GM12878 (cell line): ENCODE measurements at regions of chr1 and their contacts with region 1.

Region 1: GRCh38 chr1:179365320-179366092 is at the start of gene AXDND1:
- DNase-seq: peak; percentile 70
- ATAC-seq: peak; percentile 96
- H3K4me3 ChIP-seq: peak within 1 kb of the TSS; percentile 79
- H3K27ac ChIP-seq: peak within 1 kb of the TSS; percentile 97
- H3K4me1 ChIP-seq: no peaks in the 10 kb centered on the region; the same call in 1 of the 2 replicates
- H3K27me3 ChIP-seq: 0 out of 4 replicates have a peak, but pooled peaks cover 0 to 2% of the 10 kb centered on the region in 2 experiments
- CTCF ChIP-seq: peak in 1 of 3 experiments; percentile 6; a peak in 1 of 6 replicates
- EP300 ChIP-seq: no peak
- POLR2A ChIP-seq: peak; percentile 67
- RAD21 ChIP-seq: no peak
- polyA plus RNA-seq, gene AXDND1: 0.16 to 0.27 TPM

Region 2: DNA sequence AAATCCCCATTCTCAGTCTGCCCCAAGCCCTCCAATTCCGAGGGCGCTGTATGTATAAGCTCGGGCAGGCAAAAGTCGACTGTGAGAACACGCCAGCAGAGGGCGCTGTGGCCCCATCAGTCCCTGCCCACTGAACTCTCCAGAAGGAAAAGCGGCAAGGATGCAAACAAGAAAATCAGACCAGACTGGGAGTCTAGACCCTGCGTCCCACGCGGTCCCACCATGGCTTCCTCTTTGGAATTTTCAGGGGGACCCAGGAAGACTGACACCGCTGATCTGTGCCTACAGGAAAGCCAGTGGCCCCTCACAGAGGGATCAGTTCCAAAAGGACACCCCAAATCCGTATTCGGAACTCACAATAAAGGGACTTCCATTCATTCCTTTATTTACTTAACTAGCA is 833.1 kb before region 1 on chr1:
- CTCF ChIA-PET with region 1: no interaction called
- POLR2A ChIA-PET with region 1: no interaction called
- RAD21 ChIA-PET with region 1: interaction called, 3 read pairs
- SMC1A ChIA-PET with region 1: no interaction called
- in situ Hi-C with region 1: loop called (anchors 5 kb)
- intact Hi-C with region 1: no loop called
- DNase-seq: no peak
- ATAC-seq: peak; percentile 97
- H3K4me3 ChIP-seq: no peak overlapping the region
- H3K27ac ChIP-seq: no peak overlapping the region
- H3K4me1 ChIP-seq: no peaks in the 10 kb centered on the region
- H3K27me3 ChIP-seq: no peaks in the 10 kb centered on the region; a peak in 1 of 4 replicates
- CTCF ChIP-seq: peak; percentile 87 to 93 (median 89); a peak in 5 of 6 replicates
- EP300 ChIP-seq: no peak
- POLR2A ChIP-seq: no peak
- RAD21 ChIP-seq: peak; percentile 88

Region 3: GRCh38 chr1:179025125-179025974 is 340.2 kb before region 1 on chr1 and contains the start of gene FAM20B:
- CTCF ChIA-PET with region 1: interaction called, 3 read pairs
- POLR2A ChIA-PET with region 1: no interaction called
- RAD21 ChIA-PET with region 1: no interaction called
- SMC1A ChIA-PET with region 1: no interaction called
- in situ Hi-C with region 1: no loop called
- intact Hi-C with region 1: loop called (anchors 5 kb)
- DNase-seq: peak; percentile 59
- ATAC-seq: peak; percentile 89
- H3K4me3 ChIP-seq: peak within 1 kb of the TSS; percentile 72
- H3K27ac ChIP-seq: peak within 1 kb of the TSS; percentile 81
- H3K4me1 ChIP-seq: peaks cover 19% of the 10 kb centered on the region
- H3K27me3 ChIP-seq: no peaks in the 10 kb centered on the region
- CTCF ChIP-seq: no peak
- EP300 ChIP-seq: no peak
- POLR2A ChIP-seq: no peak
- RAD21 ChIP-seq: no peak
- polyA plus RNA-seq, gene FAM20B: 2.4 to 4.0 TPM

Region 4: GRCh38 chr1:179105350-179105749 is 260.2 kb before region 1 on chr1:
- CTCF ChIA-PET with region 1: interaction called, 11 read pairs
- POLR2A ChIA-PET with region 1: no interaction called
- RAD21 ChIA-PET with region 1: no interaction called
- SMC1A ChIA-PET with region 1: interaction called, 4 read pairs
- in situ Hi-C with region 1: no loop called
- intact Hi-C with region 1: no loop called
- DNase-seq: no peak
- ATAC-seq: peak; percentile 63
- H3K4me3 ChIP-seq: no peak overlapping the region
- H3K27ac ChIP-seq: no peak overlapping the region
- H3K4me1 ChIP-seq: no peaks in the 10 kb centered on the region
- H3K27me3 ChIP-seq: no peaks in the 10 kb centered on the region
- CTCF ChIP-seq: peak; percentile 19 to 32 (median 26); a peak in 4 of 6 replicates
- EP300 ChIP-seq: no peak
- POLR2A ChIP-seq: no peak
- RAD21 ChIP-seq: 0 out of 2 replicates have a peak, but pooled peaks have one; percentile 15

Region 5: GRCh38 chr1:179251675-179252074 is 113.8 kb before region 1 on chr1:
- CTCF ChIA-PET with region 1: interaction called, 48 read pairs
- POLR2A ChIA-PET with region 1: no interaction called
- RAD21 ChIA-PET with region 1: interaction called, 13 read pairs
- SMC1A ChIA-PET with region 1: interaction called, 27 read pairs
- in situ Hi-C with region 1: no loop called
- intact Hi-C with region 1: loop called (anchors 1 kb)
- DNase-seq: no peak
- ATAC-seq: peak; percentile 57
- H3K4me3 ChIP-seq: no peak overlapping the region
- H3K27ac ChIP-seq: no peak overlapping the region
- H3K4me1 ChIP-seq: no peaks in the 10 kb centered on the region
- H3K27me3 ChIP-seq: no peaks in the 10 kb centered on the region
- CTCF ChIP-seq: peak; percentile 16 to 47 (median 24); a peak in 3 of 6 replicates
- EP300 ChIP-seq: no peak
- POLR2A ChIP-seq: no peak
- RAD21 ChIP-seq: peak; percentile 53

Region 6: DNA sequence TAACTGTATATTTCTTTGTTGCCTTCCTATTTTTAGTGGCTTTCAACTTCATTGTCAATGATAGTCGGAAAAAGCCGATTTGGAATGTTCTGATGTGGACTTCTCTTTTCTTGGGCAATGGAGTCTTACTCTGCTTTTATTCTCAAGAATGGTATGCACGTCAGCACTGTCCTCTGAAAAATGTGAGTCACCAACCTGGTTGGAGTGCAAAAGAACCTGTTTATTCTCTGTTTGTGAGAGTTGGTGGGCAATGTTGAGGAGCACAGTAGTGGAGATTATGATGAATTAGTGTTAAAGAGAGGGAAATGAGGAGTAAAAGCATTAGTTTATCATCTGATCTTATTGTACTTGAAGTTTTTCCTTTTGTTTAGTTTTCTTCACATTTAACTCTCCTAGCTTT is 14.2 kb before region 1 on chr1:
- CTCF ChIA-PET with region 1: interaction called, 3 read pairs
- POLR2A ChIA-PET with region 1: interaction called, 10 read pairs
- RAD21 ChIA-PET with region 1: interaction called, 3 read pairs
- SMC1A ChIA-PET with region 1: interaction called, 3 read pairs
- in situ Hi-C with region 1: no loop called
- intact Hi-C with region 1: no loop called
- DNase-seq: no peak
- ATAC-seq: no peak
- H3K4me3 ChIP-seq: no peak overlapping the region
- H3K27ac ChIP-seq: no peak overlapping the region
- H3K4me1 ChIP-seq: no peaks in the 10 kb centered on the region
- H3K27me3 ChIP-seq: no peaks in the 10 kb centered on the region
- CTCF ChIP-seq: no peak
- EP300 ChIP-seq: no peak
- POLR2A ChIP-seq: no peak
- RAD21 ChIP-seq: no peak

Region 7: DNA sequence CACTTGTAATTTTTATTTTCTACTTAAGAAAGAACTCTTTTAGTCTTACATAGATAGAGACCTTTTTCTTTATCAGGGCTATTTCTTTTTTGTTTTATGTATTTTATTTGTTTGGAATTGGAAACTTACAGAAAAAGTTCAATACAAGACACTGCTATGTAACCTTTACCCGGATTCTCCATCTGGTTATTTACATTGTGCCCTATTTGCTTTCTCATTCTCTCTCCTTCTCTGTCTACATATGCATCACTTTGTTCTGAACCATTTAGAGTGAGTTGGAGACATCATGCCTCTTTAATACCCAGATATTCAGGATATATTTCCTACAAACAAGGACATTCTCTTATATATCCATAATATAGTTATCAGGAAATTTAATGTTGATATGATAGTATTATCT is 18.5 kb after region 1 on chr1:
- CTCF ChIA-PET with region 1: no interaction called
- POLR2A ChIA-PET with region 1: no interaction called
- RAD21 ChIA-PET with region 1: no interaction called
- SMC1A ChIA-PET with region 1: no interaction called
- in situ Hi-C with region 1: no loop called
- intact Hi-C with region 1: no loop called
- DNase-seq: no peak
- ATAC-seq: no peak
- H3K4me3 ChIP-seq: no peak overlapping the region
- H3K27ac ChIP-seq: no peak overlapping the region
- H3K4me1 ChIP-seq: no peaks in the 10 kb centered on the region
- H3K27me3 ChIP-seq: no peaks in the 10 kb centered on the region
- CTCF ChIP-seq: no peak
- EP300 ChIP-seq: no peak
- POLR2A ChIP-seq: no peak
- RAD21 ChIP-seq: no peak